ENCODE measurements at regions of chr6 and their contacts with region 1.

Region 1: GRCh38 chr6:139369568-139370282 is 4.7 kb downstream of the CITED2 start:
- DNase-seq: no peak
- ATAC-seq: no peak
- H3K4me3 ChIP-seq: peak overlapping the region in 7 of 10 donors; percentile 0 to 97 (median 79)
- H3K27ac ChIP-seq: peak overlapping the region; percentile 38 to 99 (median 98)
- H3K4me1 ChIP-seq: peaks cover 0 to 48% (median 41%) of the 10 kb centered on the region in 9 donors
- H3K27me3 ChIP-seq: no peaks in the 10 kb centered on the region
- CTCF ChIP-seq: peak; percentile 60 to 83 (median 76)

Region 2: GRCh38 chr6:139124887-139125672 is 244.6 kb before region 1 on chr6:
- intact Hi-C with region 1: loop called in 9 of 10 experiments (anchors 1 to 10 kb)
- DNase-seq: peak; percentile 42 to 66
- ATAC-seq: peak; percentile 92 to 99 (median 97)
- H3K4me3 ChIP-seq: no peak overlapping the region
- H3K27ac ChIP-seq: peak overlapping the region in 4 of 10 donors; percentile 2 to 64 (median 23)
- H3K4me1 ChIP-seq: peaks cover 0 to 28% (median 6%) of the 10 kb centered on the region in 9 donors
- H3K27me3 ChIP-seq: no peaks in the 10 kb centered on the region
- CTCF ChIP-seq: peak; percentile 38 to 76 (median 63)

Region 3: DNA sequence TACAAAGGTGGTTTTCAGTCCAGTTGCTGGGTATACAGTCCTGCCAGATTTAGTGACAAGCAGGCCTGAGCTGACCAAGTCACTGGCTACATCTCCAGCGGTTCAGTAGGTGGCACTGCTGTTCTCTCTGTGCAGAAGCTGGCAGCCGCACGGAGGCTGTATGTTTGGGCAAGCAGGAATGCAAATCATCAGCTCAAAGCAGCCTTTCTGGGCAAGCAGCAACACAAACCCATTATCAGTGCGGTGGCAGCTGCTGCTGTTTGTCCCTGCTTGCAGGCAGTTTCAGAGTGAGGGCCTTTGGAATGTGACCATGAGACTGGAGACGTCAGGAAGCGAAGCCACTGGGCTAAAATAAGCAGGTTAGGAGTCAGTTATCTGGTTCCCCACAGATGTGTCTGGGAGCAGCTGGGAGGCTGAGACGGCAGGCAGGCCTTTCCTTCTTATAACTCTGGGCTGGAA is 150.4 kb before region 1 on chr6:
- intact Hi-C with region 1: loop called in 8 of 10 experiments (anchors 1 to 5 kb)
- DNase-seq: peak; percentile 79 to 84
- ATAC-seq: peak; percentile 97 to 99 (median 98)
- H3K4me3 ChIP-seq: peak overlapping the region in 1 of 10 donors; percentile 2
- H3K27ac ChIP-seq: peak overlapping the region; percentile 17 to 81 (median 70)
- H3K4me1 ChIP-seq: peaks cover 0 to 18% (median 10%) of the 10 kb centered on the region in 9 donors
- H3K27me3 ChIP-seq: no peaks in the 10 kb centered on the region
- CTCF ChIP-seq: peak; percentile 65 to 95 (median 79)

Region 4: DNA sequence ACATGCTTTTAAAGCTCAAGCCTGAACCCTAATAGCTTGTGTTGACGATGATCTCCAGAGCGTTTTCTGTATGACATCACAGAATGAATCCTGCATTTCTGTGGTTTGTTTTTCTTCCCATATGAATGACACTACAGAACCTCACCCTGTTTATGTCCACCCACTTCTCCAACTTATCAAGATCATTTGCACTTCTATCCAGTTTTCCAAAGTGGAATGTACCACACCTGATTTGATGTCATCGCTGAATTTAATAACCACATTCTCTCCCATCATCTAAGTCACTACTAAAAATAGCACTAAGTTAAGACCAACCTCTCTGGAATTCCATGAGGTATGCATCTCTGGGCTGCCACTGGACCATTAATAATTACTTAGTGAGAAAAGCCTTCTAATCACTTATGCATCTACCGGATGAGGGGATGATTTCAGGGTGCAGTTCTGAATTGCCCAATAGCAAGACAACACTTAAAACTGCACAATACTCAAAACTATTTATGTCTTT is 38.0 kb after region 1 on chr6:
- intact Hi-C with region 1: no loop called
- DNase-seq: no peak
- ATAC-seq: peak in 1 of 8 donors; percentile 29
- H3K4me3 ChIP-seq: no peak overlapping the region
- H3K27ac ChIP-seq: no peak overlapping the region
- H3K4me1 ChIP-seq: peaks cover 0 to 14% (median 0%) of the 10 kb centered on the region in 9 donors
- H3K27me3 ChIP-seq: no peaks in the 10 kb centered on the region
- CTCF ChIP-seq: no peak

Region 5: DNA sequence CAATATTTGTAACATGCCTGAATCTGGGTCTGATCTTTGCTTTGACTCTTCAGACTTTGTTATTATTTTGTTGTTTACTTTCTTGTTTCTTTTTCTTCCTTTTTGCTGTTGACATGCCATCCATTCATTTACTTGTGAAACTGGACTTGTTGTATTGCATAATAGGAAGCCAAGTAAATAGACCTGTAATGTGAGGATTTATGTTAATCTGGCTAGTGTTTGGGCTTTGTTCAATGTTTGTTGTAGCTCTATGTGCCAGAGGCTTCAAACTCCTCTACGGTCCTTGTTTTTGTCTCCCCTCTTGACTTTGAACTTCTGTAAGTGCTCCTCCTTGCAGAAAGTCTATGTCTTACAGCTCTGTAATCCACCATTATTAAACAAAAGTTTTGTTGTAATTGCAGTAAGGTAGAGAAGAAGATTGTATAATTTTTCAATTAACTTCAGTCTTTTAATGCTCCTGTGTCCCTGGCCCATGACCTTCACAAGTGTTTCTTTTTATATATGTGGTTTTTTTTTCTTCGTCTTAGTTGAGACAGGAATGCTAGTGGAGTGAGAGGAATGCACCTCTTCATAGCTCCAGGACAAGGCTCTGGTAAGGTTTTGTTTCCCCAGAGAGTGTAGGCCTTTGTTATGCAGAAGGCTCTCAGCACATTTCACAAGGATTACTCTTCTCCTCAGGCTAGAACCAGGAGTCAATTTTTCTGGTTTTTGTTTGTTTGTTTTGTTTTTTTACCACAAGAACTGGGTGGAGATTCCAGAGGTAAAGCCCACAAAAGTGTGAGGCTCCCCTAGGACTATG is 1066.5 kb after region 1 on chr6:
- intact Hi-C with region 1: loop called in 9 of 10 experiments (anchors 1 to 10 kb)
- DNase-seq: no peak
- ATAC-seq: no peak
- H3K4me3 ChIP-seq: no peak overlapping the region
- H3K27ac ChIP-seq: no peak overlapping the region
- H3K4me1 ChIP-seq: peaks cover 0 to 33% (median 10%) of the 10 kb centered on the region in 9 donors
- H3K27me3 ChIP-seq: no peaks in the 10 kb centered on the region
- CTCF ChIP-seq: no peak

Measured in heart right ventricle (tissue), 16 donors.